Caco-2 (cell line): ENCODE measurements at regions of chr9 and their contacts with region 1.

Region 1: DNA sequence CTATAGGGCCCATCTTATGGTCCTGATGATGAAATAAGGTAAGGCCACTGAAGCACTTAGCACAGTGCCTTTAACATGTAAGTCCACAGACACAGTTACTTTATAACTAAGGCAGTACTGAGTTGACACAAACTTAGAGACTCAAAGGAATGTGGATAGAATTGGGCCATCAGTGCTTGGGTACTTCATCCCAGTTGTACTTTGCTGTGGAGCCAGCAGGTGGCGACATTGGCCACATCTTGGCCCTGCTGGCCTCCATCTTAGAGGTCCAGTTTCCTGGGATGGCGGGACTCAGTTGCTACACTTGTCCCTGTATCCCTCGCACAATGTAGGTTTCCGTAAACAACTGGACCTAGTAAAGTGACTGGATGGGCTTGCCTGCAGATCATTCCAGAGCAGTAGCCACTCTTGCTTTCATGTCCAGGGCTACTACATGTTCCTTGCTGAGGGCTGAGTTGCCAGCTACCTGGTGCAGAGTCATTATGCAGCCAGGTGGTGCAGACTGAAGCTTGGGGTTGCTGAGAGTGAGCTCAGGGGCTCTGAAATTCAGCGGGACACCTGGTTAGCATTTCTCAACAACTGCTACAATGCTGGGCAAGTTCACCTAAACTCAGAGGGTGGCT is 10.6 kb downstream of the MTAP start:
- DNase-seq: peak; percentile 59 to 75
- H3K4me3 ChIP-seq: no peak overlapping the region
- H3K4me3 Mint-ChIP-seq: no peak overlapping the region
- H3K27ac Mint-ChIP-seq: no peak overlapping the region
- H3K4me1 ChIP-seq: no peaks in the 10 kb centered on the region
- H3K4me1 Mint-ChIP-seq: no peaks in the 10 kb centered on the region
- H3K27me3 ChIP-seq: no peaks in the 10 kb centered on the region
- H3K27me3 Mint-ChIP-seq: no peaks in the 10 kb centered on the region
- CTCF ChIP-seq: peak; percentile 74 to 77

Region 2: DNA sequence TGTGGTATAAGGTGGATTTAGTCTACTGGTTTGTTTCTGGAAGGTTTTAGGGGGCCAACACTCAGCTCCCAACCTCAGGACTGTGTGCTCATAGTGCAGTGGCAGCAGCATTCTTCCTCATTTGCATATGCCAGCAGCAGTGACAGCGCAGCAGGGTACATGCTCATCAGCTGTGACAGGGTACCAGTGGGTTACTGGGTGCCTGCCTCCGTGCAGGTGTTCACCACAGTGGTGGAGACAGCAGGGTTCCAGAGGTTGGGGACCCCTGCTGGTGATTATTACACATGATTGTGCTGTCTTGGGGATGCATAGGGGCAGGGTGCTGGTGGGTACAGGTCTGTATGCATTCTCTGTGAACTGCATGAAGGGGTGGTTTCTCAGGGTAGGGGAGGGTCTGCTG is 285.5 kb before region 1 on chr9:
- CTCF ChIA-PET with region 1: no interaction called
- POLR2A ChIA-PET with region 1: no interaction called
- intact Hi-C with region 1: no loop called
- DNase-seq: no peak
- H3K4me3 ChIP-seq: no peak overlapping the region
- H3K4me3 Mint-ChIP-seq: no peak overlapping the region
- H3K27ac Mint-ChIP-seq: no peak overlapping the region
- H3K4me1 ChIP-seq: no peaks in the 10 kb centered on the region
- H3K4me1 Mint-ChIP-seq: no peaks in the 10 kb centered on the region
- H3K27me3 ChIP-seq: no peaks in the 10 kb centered on the region
- H3K27me3 Mint-ChIP-seq: no peaks in the 10 kb centered on the region
- CTCF ChIP-seq: no peak

Region 3: DNA sequence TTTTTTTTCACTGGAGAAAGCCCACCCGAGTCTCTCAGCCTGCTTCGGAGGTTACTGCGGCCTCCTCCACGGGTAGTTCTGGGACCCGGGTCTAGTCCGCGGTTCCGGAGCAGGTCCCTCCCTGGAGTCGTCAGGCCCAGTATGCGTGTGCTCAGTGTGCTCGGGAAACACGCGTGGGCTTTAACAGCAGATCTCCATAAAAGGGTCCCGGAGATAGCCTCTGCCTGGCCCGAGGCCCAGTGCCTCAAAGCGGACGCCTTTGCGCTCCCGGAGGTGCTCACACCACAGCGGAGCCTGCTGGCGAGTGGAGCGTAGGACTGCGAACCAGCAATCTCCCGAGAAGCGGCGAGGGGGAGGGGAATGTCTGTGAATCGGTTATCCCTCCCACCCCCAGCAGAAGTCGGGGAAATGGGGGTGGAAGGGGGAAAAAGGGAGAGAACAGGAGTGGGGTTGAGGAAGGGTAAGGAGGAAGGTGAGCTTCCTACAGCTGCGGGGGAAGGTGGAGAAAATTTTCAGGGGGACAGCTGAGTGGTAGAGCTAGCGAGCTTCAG is 152.4 kb after region 1 on chr9:
- CTCF ChIA-PET with region 1: no interaction called
- POLR2A ChIA-PET with region 1: no interaction called
- intact Hi-C with region 1: loop called (anchors 1 kb)
- DNase-seq: peak; percentile 77 to 79
- H3K4me3 ChIP-seq: peak overlapping the region; percentile 59
- H3K4me3 Mint-ChIP-seq: peak overlapping the region; percentile 66
- H3K27ac Mint-ChIP-seq: no peak overlapping the region
- H3K4me1 ChIP-seq: no peaks in the 10 kb centered on the region
- H3K4me1 Mint-ChIP-seq: no peaks in the 10 kb centered on the region
- H3K27me3 ChIP-seq: no peaks in the 10 kb centered on the region
- H3K27me3 Mint-ChIP-seq: no peaks in the 10 kb centered on the region
- CTCF ChIP-seq: peak; percentile 26 to 74

Region 4: GRCh38 chr9:22008736-22009562 is 195.9 kb after region 1 on chr9 and contains the start of gene CDKN2B:
- CTCF ChIA-PET with region 1: interaction called, 8 read pairs
- POLR2A ChIA-PET with region 1: no interaction called
- intact Hi-C with region 1: loop called (anchors 1 kb)
- DNase-seq: peak; percentile 94 to 96
- H3K4me3 ChIP-seq: peak within 1 kb of the TSS; percentile 91
- H3K4me3 Mint-ChIP-seq: peak within 1 kb of the TSS; percentile 100
- H3K27ac Mint-ChIP-seq: peak within 1 kb of the TSS; percentile 51
- H3K4me1 ChIP-seq: no peaks in the 10 kb centered on the region
- H3K4me1 Mint-ChIP-seq: no peaks in the 10 kb centered on the region
- H3K27me3 ChIP-seq: no peaks in the 10 kb centered on the region
- H3K27me3 Mint-ChIP-seq: no peaks in the 10 kb centered on the region
- CTCF ChIP-seq: peak; percentile 53 to 79
- total RNA-seq, gene CDKN2B: 7.6 and 8.2 TPM in 2 replicates

Region 5: GRCh38 chr9:22107147-22108045 is 294.3 kb after region 1 on chr9:
- CTCF ChIA-PET with region 1: no interaction called
- POLR2A ChIA-PET with region 1: no interaction called
- intact Hi-C with region 1: loop called (anchors 2 kb)
- DNase-seq: peak in 1 of 2 experiments; percentile 49
- H3K4me3 ChIP-seq: no peak overlapping the region
- H3K4me3 Mint-ChIP-seq: no peak overlapping the region
- H3K27ac Mint-ChIP-seq: no peak overlapping the region
- H3K4me1 ChIP-seq: peaks cover 55% of the 10 kb centered on the region
- H3K4me1 Mint-ChIP-seq: peaks cover 37% of the 10 kb centered on the region
- H3K27me3 ChIP-seq: no peaks in the 10 kb centered on the region
- H3K27me3 Mint-ChIP-seq: no peaks in the 10 kb centered on the region
- CTCF ChIP-seq: no peak

Region 6: GRCh38 chr9:22238809-22239684 is 426.0 kb after region 1 on chr9:
- CTCF ChIA-PET with region 1: interaction called, 4 read pairs
- POLR2A ChIA-PET with region 1: no interaction called
- intact Hi-C with region 1: loop called (anchors 1 kb)
- DNase-seq: no peak
- H3K4me3 ChIP-seq: no peak overlapping the region
- H3K4me3 Mint-ChIP-seq: no peak overlapping the region
- H3K27ac Mint-ChIP-seq: peak overlapping the region; percentile 56
- H3K4me1 ChIP-seq: peaks cover 20% of the 10 kb centered on the region
- H3K4me1 Mint-ChIP-seq: peaks cover 17% of the 10 kb centered on the region
- H3K27me3 ChIP-seq: no peaks in the 10 kb centered on the region
- H3K27me3 Mint-ChIP-seq: peaks cover 6% of the 10 kb centered on the region
- CTCF ChIP-seq: peak; percentile 10 to 39

Region 7: DNA sequence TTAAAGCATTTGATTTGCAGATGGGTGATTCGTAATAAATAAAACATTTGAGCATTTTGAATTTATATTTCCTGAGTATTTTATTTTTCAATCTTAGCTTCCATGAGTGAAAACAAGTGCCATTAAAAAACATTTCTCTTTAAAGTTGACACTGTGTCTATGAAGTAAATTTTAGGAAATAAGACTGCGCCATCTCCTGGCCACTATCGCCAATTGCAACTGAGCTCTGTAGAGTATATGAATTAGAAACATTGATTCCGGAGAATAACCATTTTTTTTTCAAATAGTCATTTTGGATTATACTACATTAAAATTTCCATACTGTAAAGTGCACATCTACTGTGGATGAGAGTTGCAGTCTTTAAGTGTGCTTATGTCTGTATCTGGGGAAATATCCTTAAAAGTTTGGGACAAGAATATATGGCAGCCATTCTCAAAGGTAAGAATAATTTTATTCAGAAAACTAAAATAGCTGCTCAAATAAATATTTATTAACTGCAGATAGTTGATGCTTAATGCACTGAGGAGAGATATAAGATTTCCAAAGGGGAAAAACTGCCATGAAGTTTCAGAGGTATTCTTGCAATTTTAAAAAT is 639.5 kb after region 1 on chr9:
- CTCF ChIA-PET with region 1: no interaction called
- POLR2A ChIA-PET with region 1: no interaction called
- intact Hi-C with region 1: loop called (anchors 5 kb)
- DNase-seq: peak in 1 of 2 experiments; percentile 33
- H3K4me3 ChIP-seq: no peak overlapping the region
- H3K4me3 Mint-ChIP-seq: no peak overlapping the region
- H3K27ac Mint-ChIP-seq: no peak overlapping the region
- H3K4me1 ChIP-seq: no peaks in the 10 kb centered on the region
- H3K4me1 Mint-ChIP-seq: no peaks in the 10 kb centered on the region
- H3K27me3 ChIP-seq: no peaks in the 10 kb centered on the region
- H3K27me3 Mint-ChIP-seq: peaks cover 4% of the 10 kb centered on the region
- CTCF ChIP-seq: peak; percentile 54 to 55